HCT116 (cell line): ENCODE measurements at regions of chr1 and their contacts with region 1.

Region 1: DNA sequence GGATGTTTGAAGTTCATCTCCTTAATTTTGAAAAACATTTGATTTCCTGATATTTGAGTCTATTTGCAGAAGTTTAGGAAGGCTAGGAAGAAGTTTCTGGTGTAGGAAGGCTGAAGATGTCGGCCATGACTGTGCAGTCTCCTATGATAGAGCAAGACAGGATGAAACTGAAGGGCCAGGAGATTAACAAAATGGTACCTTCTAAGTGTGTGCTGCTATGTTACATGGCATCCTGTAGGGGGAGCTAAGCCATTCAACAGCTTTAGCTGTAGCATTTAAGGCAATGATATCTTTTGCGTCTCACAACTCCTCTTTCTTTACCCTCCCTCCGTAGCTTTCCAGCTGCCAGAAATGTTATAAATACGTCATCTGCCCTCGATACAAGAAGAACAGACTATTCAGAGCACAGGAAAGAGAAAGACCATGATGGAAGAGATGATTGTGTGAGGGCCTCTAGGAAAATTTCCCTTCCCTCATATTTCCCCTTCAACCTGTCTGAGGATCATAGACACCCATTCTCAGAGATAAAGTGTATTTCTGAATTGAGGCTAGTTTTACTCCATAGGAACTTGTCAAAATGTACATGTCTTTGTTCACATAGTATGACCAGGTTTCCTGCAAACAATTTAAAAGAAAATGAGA is 61.1 kb downstream of the XCL1 start:
- DNase-seq: peak; percentile 69
- ATAC-seq: peak; percentile 94
- H3K4me3 ChIP-seq: no peak overlapping the region
- H3K27ac ChIP-seq: no peak overlapping the region
- H3K4me1 ChIP-seq: peaks cover 0 to 9% of the 10 kb centered on the region in 2 experiments; a peak in 1 of 4 replicates
- H3K27me3 ChIP-seq: no peaks in the 10 kb centered on the region
- CTCF ChIP-seq: peak; percentile 43 to 85 (median 82); a peak in 5 of 6 replicates
- POLR2A ChIP-seq: no peak
- RAD21 ChIP-seq: peak; percentile 65

Region 2: GRCh38 chr1:168408536-168409242 is 228.8 kb before region 1 on chr1:
- CTCF ChIA-PET with region 1: no interaction called
- POLR2A ChIA-PET with region 1: no interaction called
- RAD21 ChIA-PET with region 1: no interaction called
- intact Hi-C with region 1: no loop called
- DNase-seq: peak; percentile 95
- ATAC-seq: peak; percentile 72
- H3K4me3 ChIP-seq: peak overlapping the region; percentile 10 to 30; a peak in 3 of 4 replicates
- H3K27ac ChIP-seq: peak overlapping the region; percentile 95
- H3K4me1 ChIP-seq: peaks cover 53 to 72% of the 10 kb centered on the region in 2 experiments
- H3K27me3 ChIP-seq: no peaks in the 10 kb centered on the region
- CTCF ChIP-seq: no peak
- POLR2A ChIP-seq: no peak
- RAD21 ChIP-seq: peak; percentile 40

Region 3: GRCh38 chr1:168623003-168623828 is 14.3 kb before region 1 on chr1:
- CTCF ChIA-PET with region 1: interaction called, 11 read pairs
- POLR2A ChIA-PET with region 1: interaction called, 4 read pairs
- RAD21 ChIA-PET with region 1: no interaction called
- intact Hi-C with region 1: no loop called
- DNase-seq: peak; percentile 72
- ATAC-seq: peak; percentile 97
- H3K4me3 ChIP-seq: peak overlapping the region in 1 of 2 experiments; percentile 32; a peak in 2 of 4 replicates
- H3K27ac ChIP-seq: no peak overlapping the region
- H3K4me1 ChIP-seq: peaks cover 7 to 15% of the 10 kb centered on the region in 2 experiments; a peak in 3 of 4 replicates
- H3K27me3 ChIP-seq: no peaks in the 10 kb centered on the region
- CTCF ChIP-seq: peak in 2 of 3 experiments; percentile 8 to 15; a peak in 1 of 6 replicates
- POLR2A ChIP-seq: no peak
- RAD21 ChIP-seq: peak; percentile 40

Region 4: GRCh38 chr1:168653567-168653966 is 16.1 kb after region 1 on chr1:
- CTCF ChIA-PET with region 1: interaction called, 13 read pairs
- POLR2A ChIA-PET with region 1: no interaction called
- RAD21 ChIA-PET with region 1: no interaction called
- intact Hi-C with region 1: no loop called
- DNase-seq: no peak
- ATAC-seq: no peak
- H3K4me3 ChIP-seq: no peak overlapping the region
- H3K27ac ChIP-seq: no peak overlapping the region
- H3K4me1 ChIP-seq: no peaks in the 10 kb centered on the region
- H3K27me3 ChIP-seq: no peaks in the 10 kb centered on the region
- CTCF ChIP-seq: no peak
- POLR2A ChIP-seq: no peak
- RAD21 ChIP-seq: no peak